A549 (cell line): ENCODE measurements at regions of chr10 and their contacts with region 1.

Region 1: DNA sequence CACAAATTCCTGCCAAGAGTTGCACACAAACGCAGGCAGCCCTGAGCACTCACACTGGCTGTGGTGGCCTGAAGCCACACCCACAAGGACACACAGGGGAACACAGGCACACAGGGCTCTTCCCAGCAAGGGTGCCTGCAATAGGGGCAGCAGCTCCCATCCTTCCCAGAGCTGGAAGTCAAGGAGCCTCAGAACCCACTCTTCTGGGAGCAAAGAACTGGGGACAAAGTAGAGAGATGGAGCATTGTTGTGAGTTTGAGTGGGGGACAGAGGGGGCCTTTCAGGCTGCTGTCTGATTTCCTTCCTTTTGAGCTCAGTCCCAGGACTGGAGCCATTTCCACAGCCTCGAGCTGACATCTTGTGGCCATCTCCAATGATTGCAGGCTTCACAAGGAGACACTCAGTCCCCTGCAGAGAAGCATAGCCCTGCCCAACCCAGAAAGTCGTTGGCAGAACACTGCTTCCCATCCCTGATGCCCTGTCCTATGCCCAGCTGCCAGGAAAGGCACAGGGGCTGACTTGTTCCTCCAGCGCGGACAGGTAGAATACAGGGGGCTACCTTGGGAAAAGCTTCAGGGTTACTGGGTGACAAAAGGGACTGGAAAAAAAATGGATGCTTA is 34.4 kb upstream of the SLF2 start:
- DNase-seq: peak; percentile 80 to 92
- ATAC-seq: peak; percentile 90 to 97
- H3K4me3 ChIP-seq: no peak overlapping the region
- H3K27ac ChIP-seq: peak overlapping the region in 1 of 2 experiments; percentile 64; a peak in 2 of 6 replicates
- H3K4me1 ChIP-seq: peaks cover 15% of the 10 kb centered on the region; the same call in 2 of the 3 replicates
- CTCF ChIP-seq: peak; percentile 91
- EP300 ChIP-seq: no peak
- POLR2A ChIP-seq: no peak
- RAD21 ChIP-seq: peak; percentile 91 to 94

Region 2: GRCh38 chr10:100481462-100482081 is 396.8 kb before region 1 on chr10:
- CTCF ChIA-PET with region 1: interaction called, 14 read pairs
- POLR2A ChIA-PET with region 1: no interaction called
- DNase-seq: peak; percentile 89 to 92
- ATAC-seq: peak; percentile 94 to 97
- H3K4me3 ChIP-seq: peak overlapping the region; percentile 44
- H3K27ac ChIP-seq: no peak overlapping the region
- H3K4me1 ChIP-seq: 0 out of 3 replicates have a peak, but pooled peaks cover 3% of the 10 kb centered on the region
- CTCF ChIP-seq: no peak
- EP300 ChIP-seq: no peak
- POLR2A ChIP-seq: no peak
- RAD21 ChIP-seq: no peak

Region 3: DNA sequence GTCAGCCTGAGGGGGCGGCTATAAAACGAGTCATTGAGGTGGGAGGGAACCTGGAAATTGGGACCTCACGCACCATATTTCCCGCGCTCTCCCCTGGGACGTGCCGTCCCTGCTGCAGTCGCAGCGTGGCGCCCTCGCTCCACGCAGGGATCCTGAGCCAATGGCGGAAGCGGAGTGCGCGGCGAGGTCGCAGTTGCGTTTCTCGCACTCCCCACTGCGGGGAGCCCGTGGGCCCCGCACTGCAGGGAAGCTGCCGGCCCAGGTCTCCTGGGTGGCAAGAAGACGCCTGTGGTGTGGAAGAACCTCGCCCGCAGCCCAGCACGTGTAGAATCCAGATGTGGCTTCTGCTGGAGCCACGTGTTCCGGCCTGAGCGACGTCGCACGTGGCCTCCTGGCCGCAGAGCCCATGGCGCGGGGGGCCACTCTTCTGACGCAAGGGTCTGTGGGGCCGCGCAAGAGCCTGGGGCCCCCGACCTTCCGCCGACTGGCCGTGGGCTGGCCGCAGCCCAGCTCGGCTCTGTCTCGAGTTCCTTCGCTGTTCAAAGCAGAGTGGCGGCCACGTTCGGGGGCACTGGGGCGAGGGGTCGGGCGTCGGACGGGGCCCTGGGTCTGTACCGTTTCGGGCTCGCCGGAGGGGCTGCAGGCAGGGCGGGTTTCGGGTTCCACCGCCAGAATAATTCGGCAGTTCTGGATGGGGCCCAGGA is 316.2 kb before region 1 on chr10:
- CTCF ChIA-PET with region 1: interaction called, 289 read pairs
- POLR2A ChIA-PET with region 1: interaction called, 13 read pairs
- DNase-seq: peak; percentile 84 to 86
- ATAC-seq: peak; percentile 78 to 90
- H3K4me3 ChIP-seq: no peak overlapping the region
- H3K27ac ChIP-seq: peak overlapping the region in 1 of 2 experiments; percentile 63; a peak in 3 of 6 replicates
- H3K4me1 ChIP-seq: peaks cover 7% of the 10 kb centered on the region; the same call in 2 of the 3 replicates
- CTCF ChIP-seq: peak; percentile 98
- EP300 ChIP-seq: no peak
- POLR2A ChIP-seq: 0 out of 2 replicates have a peak, but pooled peaks have one; percentile 10
- RAD21 ChIP-seq: peak; percentile 97 to 98

Region 4: GRCh38 chr10:100683545-100684300 is 194.7 kb before region 1 on chr10:
- CTCF ChIA-PET with region 1: interaction called, 13 read pairs
- POLR2A ChIA-PET with region 1: no interaction called
- DNase-seq: no peak
- ATAC-seq: no peak
- H3K4me3 ChIP-seq: no peak overlapping the region
- H3K27ac ChIP-seq: no peak overlapping the region
- H3K4me1 ChIP-seq: peaks cover 4% of the 10 kb centered on the region; the same call in 1 of the 3 replicates
- CTCF ChIP-seq: no peak
- EP300 ChIP-seq: no peak
- POLR2A ChIP-seq: no peak
- RAD21 ChIP-seq: no peak

Region 5: DNA sequence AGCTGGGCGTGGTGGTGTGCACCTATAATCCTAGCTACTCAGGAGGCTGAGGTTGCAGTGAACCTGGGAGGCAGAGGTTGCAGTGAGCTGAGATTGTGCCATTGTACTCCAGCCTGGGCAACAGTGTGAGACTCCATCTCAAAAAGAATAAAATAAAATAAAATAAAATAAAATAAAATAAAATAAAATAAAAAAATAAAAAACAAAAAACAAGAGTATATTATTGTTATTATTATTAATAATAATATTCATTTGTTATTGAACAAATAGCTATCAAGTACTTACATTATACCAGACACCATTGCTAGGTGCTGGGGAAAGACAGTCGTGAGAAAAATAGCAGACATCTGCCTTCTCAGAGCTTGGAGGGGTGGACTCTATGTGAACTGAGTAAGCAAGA is 108.9 kb before region 1 on chr10:
- CTCF ChIA-PET with region 1: interaction called, 11 read pairs
- POLR2A ChIA-PET with region 1: no interaction called
- DNase-seq: no peak
- ATAC-seq: no peak
- H3K4me3 ChIP-seq: no peak overlapping the region
- H3K27ac ChIP-seq: no peak overlapping the region
- H3K4me1 ChIP-seq: no peaks in the 10 kb centered on the region
- CTCF ChIP-seq: no peak
- EP300 ChIP-seq: no peak
- POLR2A ChIP-seq: no peak
- RAD21 ChIP-seq: no peak

Region 6: GRCh38 chr10:100864978-100865377 is 13.4 kb before region 1 on chr10:
- CTCF ChIA-PET with region 1: interaction called, 34 read pairs
- POLR2A ChIA-PET with region 1: no interaction called
- DNase-seq: no peak
- ATAC-seq: no peak
- H3K4me3 ChIP-seq: no peak overlapping the region
- H3K27ac ChIP-seq: no peak overlapping the region
- H3K4me1 ChIP-seq: no peaks in the 10 kb centered on the region
- CTCF ChIP-seq: no peak
- EP300 ChIP-seq: no peak
- POLR2A ChIP-seq: no peak
- RAD21 ChIP-seq: no peak

Region 7: GRCh38 chr10:101110856-101111546 is 232.6 kb after region 1 on chr10:
- CTCF ChIA-PET with region 1: no interaction called
- POLR2A ChIA-PET with region 1: no interaction called
- DNase-seq: no peak
- ATAC-seq: peak; percentile 29 to 52; a peak in 3 of 6 replicates
- H3K4me3 ChIP-seq: no peak overlapping the region
- H3K27ac ChIP-seq: no peak overlapping the region
- H3K4me1 ChIP-seq: peaks cover 10% of the 10 kb centered on the region
- CTCF ChIP-seq: no peak
- EP300 ChIP-seq: no peak
- POLR2A ChIP-seq: no peak
- RAD21 ChIP-seq: no peak